Astrocyte of the cerebellum (primary cell): ENCODE measurements at regions of chr10 and their contacts with region 1.

Region 1: DNA sequence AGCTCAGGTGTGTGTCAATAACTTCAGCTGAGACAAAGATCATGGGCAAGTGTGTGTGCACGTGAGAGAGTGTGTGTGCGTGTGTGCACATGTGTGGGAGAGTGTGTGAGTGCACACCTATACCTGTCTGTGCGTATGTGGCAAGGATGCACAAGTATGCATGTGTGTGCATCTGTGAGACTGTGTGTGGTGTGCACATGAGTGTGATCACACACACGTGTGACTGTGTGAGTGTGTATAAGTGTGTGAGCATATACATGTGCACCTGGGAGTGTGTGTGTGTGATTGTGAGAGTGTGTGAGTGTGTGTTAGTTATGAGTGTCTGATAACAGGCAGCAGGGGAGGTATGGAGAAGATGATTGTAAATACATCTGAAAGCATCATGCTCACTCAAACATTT is 657.3 kb upstream of the PFKP start:
- DNase-seq: no peak
- H3K4me3 ChIP-seq: no peak overlapping the region
- CTCF ChIP-seq: no peak

Region 2: DNA sequence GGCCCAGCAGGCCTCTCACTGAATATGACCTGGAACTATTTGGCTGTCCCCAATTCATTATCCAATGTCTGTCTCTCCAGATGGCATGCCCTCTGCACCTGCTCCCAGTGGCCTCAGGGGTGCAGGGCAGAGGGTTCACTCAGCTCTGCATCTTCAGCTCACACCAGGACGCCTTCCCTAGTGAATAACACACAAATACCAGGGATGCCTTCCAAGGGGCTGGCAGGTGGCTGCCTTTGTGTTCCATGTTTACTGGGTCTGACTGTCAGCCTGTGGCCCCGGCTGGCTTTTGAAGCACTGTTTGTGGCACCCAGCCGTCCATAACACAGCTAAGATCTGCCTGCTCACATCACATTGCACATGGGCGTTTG is 67.1 kb after region 1 on chr10:
- in situ Hi-C with region 1: loop called (anchors 5 kb)
- DNase-seq: no peak
- H3K4me3 ChIP-seq: no peak overlapping the region
- CTCF ChIP-seq: no peak